Naive thymus-derived CD4-positive, alpha-beta T cell (primary cell): ENCODE measurements at regions of chr13 and their contacts with region 1.

Region 1: GRCh38 chr13:74287724-74288169 is 153.5 kb upstream of the KLF12 start:
- DNase-seq: peak; percentile 40 to 98 (median 90)
- ATAC-seq: peak; percentile 74
- H3K4me3 ChIP-seq: peak overlapping the region; percentile 51
- H3K4me3 Mint-ChIP-seq: peak overlapping the region; percentile 68 to 91 (median 82)
- H3K27ac ChIP-seq: peak overlapping the region; percentile 82
- H3K27ac Mint-ChIP-seq: peak overlapping the region; percentile 79 to 96 (median 94)
- H3K4me1 ChIP-seq: peaks cover 26 to 48% of the 10 kb centered on the region in 2 donors
- H3K4me1 Mint-ChIP-seq: peaks cover 41 to 77% (median 71%) of the 10 kb centered on the region in 7 donors
- H3K27me3 ChIP-seq: no peaks in the 10 kb centered on the region
- H3K27me3 Mint-ChIP-seq: peaks cover 0 to 2% (median 0%) of the 10 kb centered on the region in 5 donors

Region 2: GRCh38 chr13:72781451-72782439 is 1506.0 kb before region 1 on chr13 and contains the starts of genes DIS3 and PIBF1:
- CTCF ChIA-PET with region 1: no interaction called
- POLR2A ChIA-PET with region 1: no interaction called
- intact Hi-C with region 1: loop called in 1 of 2 experiments (anchors 10 kb)
- DNase-seq: peak; percentile 82 to 97 (median 94)
- ATAC-seq: peak; percentile 99
- H3K4me3 ChIP-seq: peak within 1 kb of the TSS; percentile 94
- H3K4me3 Mint-ChIP-seq: peak within 1 kb of the TSS; percentile 96 to 100 (median 99)
- H3K27ac ChIP-seq: peak within 1 kb of the TSS; percentile 87
- H3K27ac Mint-ChIP-seq: peak within 1 kb of the TSS; percentile 95 to 100 (median 98)
- H3K4me1 ChIP-seq: peaks cover 35 to 37% of the 10 kb centered on the region in 2 donors
- H3K4me1 Mint-ChIP-seq: peaks cover 44 to 84% (median 71%) of the 10 kb centered on the region in 7 donors
- H3K27me3 ChIP-seq: no peaks in the 10 kb centered on the region
- H3K27me3 Mint-ChIP-seq: no peaks in the 10 kb centered on the region
- total RNA-seq, gene DIS3: 24.8 to 44.8 (median 39.2) TPM
- total RNA-seq, gene PIBF1: 27.3 to 40.1 (median 31.6) TPM

Region 3: GRCh38 chr13:73722120-73722519 is 565.6 kb before region 1 on chr13:
- CTCF ChIA-PET with region 1: interaction called, 10 read pairs
- POLR2A ChIA-PET with region 1: no interaction called
- intact Hi-C with region 1: loop called in 1 of 2 experiments (anchors 1 kb)
- DNase-seq: peak in 3 of 9 donors; percentile 17 to 23 (median 23)
- ATAC-seq: peak; percentile 44
- H3K4me3 ChIP-seq: no peak overlapping the region
- H3K4me3 Mint-ChIP-seq: no peak overlapping the region
- H3K27ac ChIP-seq: no peak overlapping the region
- H3K27ac Mint-ChIP-seq: peak overlapping the region in 8 of 9 donors; percentile 14 to 92 (median 82)
- H3K4me1 ChIP-seq: peaks cover 6 to 7% of the 10 kb centered on the region in 2 donors
- H3K4me1 Mint-ChIP-seq: peaks cover 8 to 55% (median 50%) of the 10 kb centered on the region in 7 donors
- H3K27me3 ChIP-seq: no peaks in the 10 kb centered on the region
- H3K27me3 Mint-ChIP-seq: peaks cover 0 to 7% (median 0%) of the 10 kb centered on the region in 5 donors

Region 4: DNA sequence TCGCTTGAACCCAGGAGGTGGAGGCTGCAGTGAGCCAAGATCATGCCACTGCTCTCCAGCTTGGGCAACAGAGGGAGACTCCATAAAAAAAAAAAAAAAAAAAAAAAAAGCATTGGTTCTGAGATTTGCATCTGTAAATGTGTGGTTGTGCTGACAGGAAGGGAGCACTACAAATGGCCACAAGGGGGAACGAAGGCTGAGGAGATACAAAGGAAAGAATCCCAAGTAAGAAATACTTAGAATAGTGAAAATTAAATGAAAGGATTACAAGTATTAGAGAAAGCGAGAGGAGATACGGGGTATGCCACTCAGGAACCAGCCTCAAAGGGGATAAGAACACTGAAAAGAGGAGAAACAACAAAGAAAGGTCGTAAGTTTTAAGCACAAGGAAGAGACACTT is 438.5 kb before region 1 on chr13:
- CTCF ChIA-PET with region 1: interaction called, 7 read pairs
- POLR2A ChIA-PET with region 1: interaction called, 3 read pairs
- intact Hi-C with region 1: loop called (anchors 1 kb)
- DNase-seq: peak in 4 of 9 donors; percentile 8 to 30 (median 21)
- ATAC-seq: no peak
- H3K4me3 ChIP-seq: no peak overlapping the region
- H3K4me3 Mint-ChIP-seq: peak overlapping the region in 4 of 10 donors; percentile 6 to 65 (median 47)
- H3K27ac ChIP-seq: no peak overlapping the region
- H3K27ac Mint-ChIP-seq: peak overlapping the region in 6 of 9 donors; percentile 3 to 86 (median 64)
- H3K4me1 ChIP-seq: peaks cover 10 to 16% of the 10 kb centered on the region in 2 donors
- H3K4me1 Mint-ChIP-seq: peaks cover 6 to 64% (median 51%) of the 10 kb centered on the region in 7 donors
- H3K27me3 ChIP-seq: no peaks in the 10 kb centered on the region
- H3K27me3 Mint-ChIP-seq: no peaks in the 10 kb centered on the region

Region 5: GRCh38 chr13:74062933-74063332 is 224.8 kb before region 1 on chr13:
- CTCF ChIA-PET with region 1: interaction called, 11 read pairs
- POLR2A ChIA-PET with region 1: interaction called, 12 read pairs
- intact Hi-C with region 1: loop called (anchors 1 to 2 kb)
- DNase-seq: peak in 1 of 9 donors; percentile 24
- ATAC-seq: peak; percentile 5
- H3K4me3 ChIP-seq: no peak overlapping the region
- H3K4me3 Mint-ChIP-seq: peak overlapping the region; percentile 26 to 80 (median 64)
- H3K27ac ChIP-seq: no peak overlapping the region
- H3K27ac Mint-ChIP-seq: peak overlapping the region; percentile 58 to 86 (median 81)
- H3K4me1 ChIP-seq: peaks cover 52 to 73% of the 10 kb centered on the region in 2 donors
- H3K4me1 Mint-ChIP-seq: peaks cover 50 to 95% (median 91%) of the 10 kb centered on the region in 7 donors
- H3K27me3 ChIP-seq: no peaks in the 10 kb centered on the region
- H3K27me3 Mint-ChIP-seq: no peaks in the 10 kb centered on the region

Region 6: DNA sequence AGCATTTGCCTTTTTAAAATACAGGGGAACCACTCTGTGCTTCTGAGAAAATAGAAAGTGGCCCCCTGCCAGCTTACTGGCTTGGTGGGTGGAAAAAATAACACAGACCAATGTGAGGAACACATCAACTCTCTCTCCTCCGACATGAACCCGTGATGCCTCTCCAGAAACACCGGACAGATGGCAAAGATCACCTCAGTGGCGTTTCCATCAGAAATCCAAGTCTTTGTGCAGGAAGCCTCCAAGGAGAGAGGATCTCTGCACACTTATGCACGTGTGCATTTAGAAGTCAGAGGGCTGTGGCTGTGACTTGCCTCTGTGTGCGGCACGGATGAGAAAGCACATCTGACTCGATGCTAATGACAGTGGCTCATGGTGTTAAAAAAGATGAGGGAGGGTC is 41.3 kb before region 1 on chr13:
- CTCF ChIA-PET with region 1: interaction called, 10 read pairs
- POLR2A ChIA-PET with region 1: interaction called, 22 read pairs
- intact Hi-C with region 1: loop called (anchors 1 kb)
- DNase-seq: peak in 1 of 9 donors; percentile 42
- ATAC-seq: no peak
- H3K4me3 ChIP-seq: peak overlapping the region; percentile 17
- H3K4me3 Mint-ChIP-seq: peak overlapping the region in 9 of 10 donors; percentile 26 to 90 (median 74)
- H3K27ac ChIP-seq: peak overlapping the region; percentile 63
- H3K27ac Mint-ChIP-seq: peak overlapping the region in 8 of 9 donors; percentile 85 to 98 (median 97)
- H3K4me1 ChIP-seq: peaks cover 78 to 88% of the 10 kb centered on the region in 2 donors
- H3K4me1 Mint-ChIP-seq: peaks cover 59 to 98% (median 96%) of the 10 kb centered on the region in 7 donors
- H3K27me3 ChIP-seq: no peaks in the 10 kb centered on the region
- H3K27me3 Mint-ChIP-seq: peaks cover 0 to 9% (median 0%) of the 10 kb centered on the region in 5 donors

Region 7: DNA sequence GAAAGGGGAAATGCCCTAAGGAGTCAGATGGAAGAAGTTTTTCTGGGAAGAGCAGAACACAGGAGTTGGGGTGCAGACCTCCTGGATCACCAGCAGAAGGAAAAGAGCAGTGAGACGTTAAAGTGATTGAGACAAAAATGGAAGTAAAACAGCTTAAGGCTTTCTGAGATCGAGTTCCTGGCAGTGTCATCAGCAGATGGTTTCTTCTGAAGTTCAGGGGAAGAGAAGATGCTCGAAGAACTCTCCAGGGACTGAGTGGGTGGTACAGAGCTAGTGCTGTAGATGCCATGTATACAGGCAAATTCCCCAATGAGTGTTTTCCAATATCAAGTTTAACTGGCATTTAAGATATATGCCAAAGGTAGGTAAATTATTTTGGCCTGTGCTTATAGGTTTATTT is 118.7 kb after region 1 on chr13:
- CTCF ChIA-PET with region 1: no interaction called
- POLR2A ChIA-PET with region 1: no interaction called
- intact Hi-C with region 1: no loop called
- DNase-seq: no peak
- ATAC-seq: no peak
- H3K4me3 ChIP-seq: no peak overlapping the region
- H3K4me3 Mint-ChIP-seq: no peak overlapping the region
- H3K27ac ChIP-seq: no peak overlapping the region
- H3K27ac Mint-ChIP-seq: no peak overlapping the region
- H3K4me1 ChIP-seq: no peaks in the 10 kb centered on the region
- H3K4me1 Mint-ChIP-seq: peaks cover 0 to 6% (median 0%) of the 10 kb centered on the region in 7 donors
- H3K27me3 ChIP-seq: no peaks in the 10 kb centered on the region
- H3K27me3 Mint-ChIP-seq: no peaks in the 10 kb centered on the region

Region 8: GRCh38 chr13:75365724-75366173 is 1078.0 kb after region 1 on chr13:
- CTCF ChIA-PET with region 1: no interaction called
- POLR2A ChIA-PET with region 1: no interaction called
- intact Hi-C with region 1: loop called in 1 of 2 experiments (anchors 5 kb)
- DNase-seq: peak in 1 of 9 donors; percentile 34
- ATAC-seq: peak; percentile 75
- H3K4me3 ChIP-seq: no peak overlapping the region
- H3K4me3 Mint-ChIP-seq: peak overlapping the region in 1 of 10 donors; percentile 72
- H3K27ac ChIP-seq: no peak overlapping the region
- H3K27ac Mint-ChIP-seq: peak overlapping the region in 1 of 9 donors; percentile 86
- H3K4me1 ChIP-seq: no peaks in the 10 kb centered on the region
- H3K4me1 Mint-ChIP-seq: peaks cover 0 to 25% (median 0%) of the 10 kb centered on the region in 7 donors
- H3K27me3 ChIP-seq: no peaks in the 10 kb centered on the region
- H3K27me3 Mint-ChIP-seq: peaks cover 0 to 8% (median 0%) of the 10 kb centered on the region in 5 donors